A549 (cell line): ENCODE measurements at regions of chr9 and their contacts with region 1.

Region 1: DNA sequence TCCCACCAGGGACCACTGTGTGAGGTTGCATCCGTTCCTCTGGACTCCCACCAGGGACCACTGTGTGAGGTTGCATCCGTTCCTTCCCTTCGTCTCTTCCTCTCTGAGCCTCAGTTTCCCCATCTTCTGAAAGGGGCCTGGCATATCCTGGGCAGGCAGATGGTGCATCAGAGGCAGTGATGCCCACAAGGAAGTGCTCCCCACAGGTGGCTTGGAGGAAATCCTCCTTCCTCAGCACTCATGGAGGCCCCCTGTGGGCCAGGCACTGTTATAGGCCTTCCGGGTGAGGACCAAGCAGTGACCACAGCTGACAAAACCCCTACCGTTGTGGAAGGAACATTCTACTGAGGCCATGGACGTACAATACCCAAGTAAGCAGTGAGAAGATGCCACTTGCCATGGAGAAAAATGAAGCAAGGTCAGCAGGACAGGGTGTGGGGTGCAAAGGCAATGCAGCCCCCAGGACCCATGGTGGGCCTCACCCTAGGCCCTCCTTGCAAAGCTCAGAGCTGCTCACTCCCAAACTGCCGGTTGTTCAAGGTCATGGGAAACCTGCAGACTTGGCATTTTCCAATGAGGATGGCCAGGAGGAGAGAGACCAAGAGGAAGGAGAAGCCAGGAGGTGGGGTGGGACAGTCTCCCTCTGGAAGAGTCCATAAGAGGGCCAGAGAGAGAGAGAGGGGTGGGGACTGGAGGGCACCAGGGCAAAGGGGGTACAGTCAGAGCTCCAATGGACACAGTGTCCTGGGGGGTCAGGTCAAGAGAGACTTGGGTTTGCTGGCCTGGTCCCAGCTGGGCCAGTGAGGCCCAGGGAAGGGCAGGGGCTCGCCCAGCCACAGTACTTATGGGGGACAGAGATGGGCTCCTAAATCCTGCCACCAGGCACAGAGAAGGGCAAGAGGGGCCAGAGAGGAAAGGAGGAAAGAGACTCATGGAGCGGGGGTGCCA is 51.1 kb downstream of the C9orf50 start:
- DNase-seq: peak; percentile 70 to 90
- ATAC-seq: peak; percentile 38 to 48
- H3K4me3 ChIP-seq: no peak overlapping the region
- H3K27ac ChIP-seq: peak overlapping the region; percentile 99 to 100
- H3K4me1 ChIP-seq: peaks cover 48% of the 10 kb centered on the region
- CTCF ChIP-seq: peak; percentile 42
- EP300 ChIP-seq: no peak
- POLR2A ChIP-seq: peak; percentile 17; the same call in 1 of the 2 replicates
- RAD21 ChIP-seq: peak; percentile 27 to 44; a peak in 2 of 5 replicates

Region 2: GRCh38 chr9:129320575-129321263 is 249.1 kb before region 1 on chr9:
- CTCF ChIA-PET with region 1: no interaction called
- POLR2A ChIA-PET with region 1: no interaction called
- DNase-seq: no peak
- ATAC-seq: peak; percentile 11 to 57; a peak in 3 of 6 replicates
- H3K4me3 ChIP-seq: no peak overlapping the region
- H3K27ac ChIP-seq: peak overlapping the region; percentile 44 to 82; a peak in 5 of 6 replicates
- H3K4me1 ChIP-seq: peaks cover 43% of the 10 kb centered on the region
- CTCF ChIP-seq: no peak
- EP300 ChIP-seq: no peak
- POLR2A ChIP-seq: no peak
- RAD21 ChIP-seq: no peak

Region 3: DNA sequence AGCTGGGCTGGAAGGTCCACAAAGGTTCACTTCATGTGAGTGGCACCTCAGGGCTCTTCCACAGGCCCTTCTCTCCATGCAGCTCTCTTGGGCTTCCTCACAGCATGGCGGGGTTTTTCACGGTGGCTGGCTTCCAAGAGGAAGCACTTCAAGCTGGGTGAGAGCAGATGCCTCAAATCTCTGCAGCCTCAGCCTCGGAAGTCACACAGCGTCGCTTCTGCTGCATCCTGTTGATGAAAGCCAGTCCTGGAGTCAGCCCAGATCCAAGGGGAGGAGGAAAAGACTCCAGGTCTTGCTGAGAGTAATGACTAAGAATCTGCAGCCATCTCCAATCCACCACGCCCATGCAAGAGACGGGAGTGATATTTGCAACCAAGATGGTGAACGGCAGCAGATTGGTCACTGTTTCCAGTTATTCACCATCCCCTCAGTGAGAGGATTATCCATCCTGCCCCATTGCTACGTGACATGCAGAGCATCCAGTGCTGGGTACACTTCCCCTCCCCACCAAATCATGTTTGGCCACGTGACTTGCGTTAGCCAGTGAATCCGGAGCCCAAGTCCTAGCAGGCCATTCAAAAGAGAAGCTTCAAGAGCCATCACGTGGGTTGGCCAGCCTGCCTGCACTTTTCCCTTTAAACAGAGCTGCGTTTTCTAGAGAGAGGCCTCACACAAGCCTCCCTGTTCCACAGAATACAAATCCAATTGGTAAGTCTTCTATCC is 122.8 kb before region 1 on chr9:
- CTCF ChIA-PET with region 1: no interaction called
- POLR2A ChIA-PET with region 1: no interaction called
- DNase-seq: no peak
- ATAC-seq: no peak
- H3K4me3 ChIP-seq: no peak overlapping the region
- H3K27ac ChIP-seq: no peak overlapping the region
- H3K4me1 ChIP-seq: peaks cover 18% of the 10 kb centered on the region
- CTCF ChIP-seq: no peak
- EP300 ChIP-seq: no peak
- POLR2A ChIP-seq: no peak
- RAD21 ChIP-seq: no peak

Region 4: DNA sequence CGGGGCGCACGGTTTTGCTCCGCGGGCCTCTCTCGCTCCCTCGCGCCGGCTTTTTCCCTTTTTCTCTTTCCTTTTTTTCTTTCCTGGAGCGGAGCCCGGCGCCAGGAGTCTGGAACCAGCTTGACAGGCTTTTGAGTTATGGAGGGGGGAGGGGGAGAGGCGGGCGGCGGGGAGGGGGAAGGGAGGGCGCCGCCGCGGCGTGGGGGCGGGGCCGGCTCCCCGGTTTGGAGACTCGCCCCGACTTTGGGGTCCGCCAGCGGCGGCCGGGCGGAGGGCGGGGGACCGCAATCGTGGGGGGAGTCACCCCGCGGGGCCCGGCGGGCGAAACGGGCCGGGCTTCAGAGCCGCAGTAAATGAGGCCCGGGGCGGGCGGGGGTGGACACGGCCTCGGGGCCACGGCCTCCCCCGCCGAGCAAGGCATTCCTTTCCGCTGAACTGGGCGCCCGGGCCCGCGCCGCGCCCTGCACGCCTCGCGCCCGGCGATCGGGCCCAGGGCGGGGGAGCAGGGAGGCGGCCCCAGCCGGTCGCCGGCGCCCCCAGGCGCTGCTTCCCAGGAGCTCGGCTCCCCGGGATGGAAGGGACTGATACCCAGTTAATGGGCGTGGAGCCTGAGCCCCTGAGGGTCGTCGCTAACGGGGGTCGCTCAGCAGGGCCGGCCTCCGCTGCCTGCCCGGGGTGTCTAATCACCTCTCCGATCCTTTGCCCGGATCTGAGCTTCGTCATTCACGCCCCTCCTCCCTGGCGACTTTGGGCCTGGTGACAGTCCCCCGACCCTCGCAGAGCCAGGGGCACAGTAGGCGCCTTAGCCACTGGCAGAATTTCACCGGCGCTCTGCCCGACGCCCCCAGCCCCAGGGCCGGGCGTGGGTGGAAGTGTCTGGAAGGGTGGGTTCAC is 87.0 kb before region 1 on chr9:
- CTCF ChIA-PET with region 1: interaction called, 5 read pairs
- POLR2A ChIA-PET with region 1: interaction called, 11 read pairs
- DNase-seq: peak in 1 of 2 experiments; percentile 86
- ATAC-seq: peak; percentile 47 to 64
- H3K4me3 ChIP-seq: peak overlapping the region; percentile 47
- H3K27ac ChIP-seq: peak overlapping the region; percentile 99 to 100
- H3K4me1 ChIP-seq: peaks cover 90% of the 10 kb centered on the region
- CTCF ChIP-seq: no peak; the same call in 2 of the 3 replicates
- EP300 ChIP-seq: peak; percentile 71 to 93; a peak in 4 of 5 replicates
- POLR2A ChIP-seq: peak; percentile 29; the same call in 1 of the 2 replicates
- RAD21 ChIP-seq: peak in 1 of 2 experiments; percentile 43; a peak in 2 of 5 replicates

Region 5: GRCh38 chr9:129550199-129550839 is 19.5 kb before region 1 on chr9:
- CTCF ChIA-PET with region 1: interaction called, 14 read pairs
- POLR2A ChIA-PET with region 1: interaction called, 9 read pairs
- DNase-seq: peak; percentile 28 to 55
- ATAC-seq: peak; percentile 74 to 82
- H3K4me3 ChIP-seq: peak overlapping the region; percentile 60
- H3K27ac ChIP-seq: peak overlapping the region; percentile 98
- H3K4me1 ChIP-seq: peaks cover 49% of the 10 kb centered on the region
- CTCF ChIP-seq: no peak
- EP300 ChIP-seq: no peak
- POLR2A ChIP-seq: peak; percentile 27; the same call in 1 of the 2 replicates
- RAD21 ChIP-seq: 0 out of 5 replicates have a peak, but pooled peaks of 1 of the 2 experiments have one; percentile 18

Region 6: DNA sequence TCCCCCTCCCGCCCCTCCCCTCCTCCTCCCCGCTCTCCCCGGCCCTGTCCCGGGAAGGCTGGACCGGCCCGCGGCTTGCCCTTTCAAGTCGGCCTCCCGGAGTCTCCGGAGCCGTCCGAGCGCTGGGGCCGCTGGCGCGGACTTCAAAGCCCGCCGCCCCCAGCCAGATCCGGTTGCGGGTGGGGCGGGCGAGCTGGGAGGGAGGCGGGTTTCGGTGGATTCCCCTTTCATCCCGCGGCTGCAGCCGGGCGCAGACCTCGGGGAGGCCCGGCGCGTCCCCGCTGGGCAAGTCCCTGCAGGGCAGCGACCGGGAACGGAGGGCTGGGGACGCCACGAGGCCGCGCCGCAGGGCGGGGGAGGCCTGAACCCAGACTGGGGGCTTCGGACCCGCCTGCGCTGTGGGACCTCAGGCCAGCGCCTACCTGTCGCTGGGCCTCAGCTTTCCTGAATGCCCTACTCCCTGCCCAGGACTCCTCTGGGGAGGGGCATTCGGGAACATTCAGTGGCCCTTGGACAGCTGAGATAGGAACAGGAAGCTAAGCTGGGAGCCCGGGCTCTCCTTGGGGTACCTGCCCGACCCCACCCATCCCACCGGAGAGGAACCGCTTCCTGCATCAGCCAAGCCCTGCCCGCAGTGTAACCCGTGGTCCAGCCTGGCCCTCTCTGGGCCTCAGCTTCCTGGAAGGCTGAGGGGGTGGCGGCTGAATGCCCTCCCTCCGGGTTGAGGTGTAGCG is 27.7 kb after region 1 on chr9:
- CTCF ChIA-PET with region 1: interaction called, 10 read pairs
- POLR2A ChIA-PET with region 1: interaction called, 21 read pairs
- DNase-seq: peak; percentile 61 to 78
- ATAC-seq: peak; percentile 73 to 75
- H3K4me3 ChIP-seq: peak overlapping the region; percentile 40
- H3K27ac ChIP-seq: peak overlapping the region; percentile 99 to 100
- H3K4me1 ChIP-seq: peaks cover 57% of the 10 kb centered on the region
- CTCF ChIP-seq: no peak
- EP300 ChIP-seq: peak; percentile 75 to 88; a peak in 3 of 5 replicates
- POLR2A ChIP-seq: peak; percentile 28
- RAD21 ChIP-seq: peak in 1 of 2 experiments; percentile 30; a peak in 1 of 5 replicates

Region 7: GRCh38 chr9:129626079-129626624 is 56.4 kb after region 1 on chr9 and contains the start of gene NTMT1:
- CTCF ChIA-PET with region 1: interaction called, 12 read pairs
- POLR2A ChIA-PET with region 1: no interaction called
- DNase-seq: peak; percentile 77 to 87
- ATAC-seq: peak; percentile 78 to 84
- H3K4me3 ChIP-seq: peak within 1 kb of the TSS; percentile 69
- H3K27ac ChIP-seq: peak within 1 kb of the TSS; percentile 78 to 98
- H3K4me1 ChIP-seq: peaks cover 28% of the 10 kb centered on the region
- CTCF ChIP-seq: no peak
- EP300 ChIP-seq: no peak
- POLR2A ChIP-seq: peak; percentile 93
- RAD21 ChIP-seq: no peak
- polyA plus RNA-seq, gene NTMT1: 39.2 and 49.4 TPM in 2 replicates

Region 8: DNA sequence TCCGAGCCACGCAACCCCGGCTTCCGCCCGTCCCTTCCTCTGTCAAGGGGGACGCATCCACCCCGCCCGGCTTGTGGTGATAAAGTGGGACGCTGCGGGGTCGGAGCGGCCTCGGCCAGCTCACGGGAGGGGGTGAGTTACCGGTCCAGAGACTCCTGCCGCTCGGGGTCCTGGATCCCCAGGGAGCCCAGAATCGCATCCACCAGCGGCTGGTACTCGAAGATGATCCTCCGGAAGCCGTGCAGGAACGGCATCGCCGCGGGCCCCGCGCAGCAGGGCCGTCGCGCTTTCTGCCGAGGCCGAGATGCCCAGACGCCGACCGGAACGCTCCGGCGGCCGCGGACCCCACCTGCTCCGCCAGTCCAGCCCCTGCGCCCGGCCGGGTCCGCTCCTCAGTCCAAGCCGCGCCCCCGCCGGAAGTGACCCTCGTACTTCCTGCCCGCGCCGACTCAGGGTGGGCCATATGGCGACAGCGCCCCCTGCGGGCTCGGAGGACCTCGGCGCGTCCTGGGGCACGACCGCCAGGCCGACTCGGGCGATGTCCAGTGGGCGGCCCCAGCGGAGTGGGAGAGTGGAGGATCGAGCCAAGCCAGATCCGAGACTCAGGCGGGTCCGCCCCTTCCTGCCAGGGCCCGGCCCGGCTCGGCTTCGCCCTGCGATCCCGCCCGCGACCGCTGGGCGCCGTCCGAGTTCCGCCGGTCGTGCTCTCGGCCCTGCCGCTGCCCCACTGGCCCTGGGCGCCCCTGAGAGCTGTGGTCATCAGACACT is 72.2 kb after region 1 on chr9 and contains the start of gene ASB6:
- CTCF ChIA-PET with region 1: no interaction called
- POLR2A ChIA-PET with region 1: no interaction called
- DNase-seq: peak; percentile 98
- ATAC-seq: peak; percentile 93 to 97
- H3K4me3 ChIP-seq: peak within 1 kb of the TSS; percentile 87
- H3K27ac ChIP-seq: peak within 1 kb of the TSS; percentile 83 to 94
- H3K4me1 ChIP-seq: peaks cover 18% of the 10 kb centered on the region
- CTCF ChIP-seq: peak; percentile 99
- EP300 ChIP-seq: no peak
- POLR2A ChIP-seq: peak; percentile 60
- RAD21 ChIP-seq: peak; percentile 87 to 99
- polyA plus RNA-seq, gene ASB6: 9.2 and 9.4 TPM in 2 replicates